Transverse colon (tissue), 4 donors: ENCODE measurements at regions of chr2 and their contacts with region 1.

Region 1: GRCh38 chr2:205311201-205311600 is 371.1 kb upstream of the NRP2 start:
- DNase-seq: no peak
- H3K4me3 ChIP-seq: no peak overlapping the region
- H3K27ac ChIP-seq: no peak overlapping the region
- H3K4me1 ChIP-seq: no peaks in the 10 kb centered on the region
- H3K27me3 ChIP-seq: no peaks in the 10 kb centered on the region
- CTCF ChIP-seq: no peak
- EP300 ChIP-seq: no peak
- POLR2A ChIP-seq: no peak

Region 2: GRCh38 chr2:204428675-204429074 is 882.5 kb before region 1 on chr2:
- in situ Hi-C with region 1: no loop called
- intact Hi-C with region 1: loop called (anchors 5 kb)
- DNase-seq: no peak
- H3K4me3 ChIP-seq: no peak overlapping the region
- H3K27ac ChIP-seq: no peak overlapping the region
- H3K4me1 ChIP-seq: no peaks in the 10 kb centered on the region
- H3K27me3 ChIP-seq: no peaks in the 10 kb centered on the region
- CTCF ChIP-seq: no peak
- EP300 ChIP-seq: no peak
- POLR2A ChIP-seq: no peak